ENCODE measurements at regions of chr7 and their contacts with region 1.

Region 1: DNA sequence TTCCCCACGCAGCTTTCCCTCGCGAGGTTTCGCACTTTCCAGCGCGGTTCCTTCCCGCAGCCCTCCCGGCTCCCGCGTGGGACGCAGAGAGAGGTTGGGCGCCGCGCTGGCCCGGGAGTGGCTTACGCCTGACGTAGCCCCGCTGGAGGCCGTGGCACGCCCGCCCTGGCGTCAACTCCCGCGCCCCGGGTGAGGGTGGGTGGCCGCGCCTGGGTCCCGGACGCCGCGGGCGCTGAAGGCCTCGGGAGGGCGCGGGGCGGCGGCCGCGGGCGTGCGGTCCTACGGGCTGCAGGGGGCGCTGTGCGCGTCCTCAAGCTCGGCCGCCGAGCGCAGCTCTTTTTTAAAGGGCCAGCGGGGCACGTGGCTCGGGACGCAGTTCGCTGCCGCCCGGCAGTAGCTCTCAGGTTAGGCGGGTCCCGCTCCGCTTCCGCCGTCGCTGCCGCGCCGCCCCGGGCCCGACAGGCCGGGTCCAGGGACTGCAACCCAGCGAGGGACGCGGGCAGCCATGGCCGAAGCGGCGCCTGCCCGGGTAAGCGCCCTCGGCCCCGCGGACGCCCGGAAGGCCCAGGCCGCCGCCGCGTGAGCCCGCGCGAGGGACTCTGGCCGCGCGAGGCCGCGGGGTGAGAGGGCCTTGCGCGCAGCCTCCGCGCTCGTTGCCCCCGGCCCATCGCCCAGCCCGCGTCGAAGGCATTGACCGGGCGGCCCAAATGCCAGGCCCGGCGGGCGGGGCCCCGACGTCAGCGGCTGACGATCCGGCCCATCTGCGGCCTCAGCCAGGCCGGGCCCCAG is at the start of gene ZNF783:
- DNase-seq: peak; percentile 87 to 91
- H3K4me3 ChIP-seq: peak within 1 kb of the TSS; percentile 65
- H3K4me3 Mint-ChIP-seq: peak within 1 kb of the TSS; percentile 84
- H3K27ac Mint-ChIP-seq: peak within 1 kb of the TSS; percentile 94
- H3K4me1 ChIP-seq: no peaks in the 10 kb centered on the region
- H3K4me1 Mint-ChIP-seq: peaks cover 8% of the 10 kb centered on the region
- H3K27me3 ChIP-seq: no peaks in the 10 kb centered on the region
- H3K27me3 Mint-ChIP-seq: no peaks in the 10 kb centered on the region
- CTCF ChIP-seq: peak; percentile 58 to 90
- total RNA-seq, gene ZNF783: 26.1 and 27.3 TPM in 2 replicates

Region 2: GRCh38 chr7:148867596-148868377 is 394.2 kb before region 1 on chr7:
- CTCF ChIA-PET with region 1: no interaction called
- POLR2A ChIA-PET with region 1: no interaction called
- intact Hi-C with region 1: no loop called
- DNase-seq: no peak
- H3K4me3 ChIP-seq: no peak overlapping the region
- H3K4me3 Mint-ChIP-seq: no peak overlapping the region
- H3K27ac Mint-ChIP-seq: no peak overlapping the region
- H3K4me1 ChIP-seq: peaks cover 17% of the 10 kb centered on the region
- H3K4me1 Mint-ChIP-seq: peaks cover 15% of the 10 kb centered on the region
- H3K27me3 ChIP-seq: no peaks in the 10 kb centered on the region
- H3K27me3 Mint-ChIP-seq: no peaks in the 10 kb centered on the region
- CTCF ChIP-seq: no peak

Region 3: GRCh38 chr7:149195180-149196150 is 66.6 kb before region 1 on chr7 and contains the start of gene ZNF282:
- CTCF ChIA-PET with region 1: interaction called, 8 read pairs
- POLR2A ChIA-PET with region 1: interaction called, 13 read pairs
- intact Hi-C with region 1: no loop called
- DNase-seq: peak; percentile 94 to 96
- H3K4me3 ChIP-seq: peak within 1 kb of the TSS; percentile 94
- H3K4me3 Mint-ChIP-seq: peak within 1 kb of the TSS; percentile 85
- H3K27ac Mint-ChIP-seq: peak within 1 kb of the TSS; percentile 87
- H3K4me1 ChIP-seq: no peaks in the 10 kb centered on the region; the same call in 1 of the 2 replicates
- H3K4me1 Mint-ChIP-seq: no peaks in the 10 kb centered on the region
- H3K27me3 ChIP-seq: no peaks in the 10 kb centered on the region
- H3K27me3 Mint-ChIP-seq: no peaks in the 10 kb centered on the region
- CTCF ChIP-seq: peak; percentile 49 to 82
- total RNA-seq, gene ZNF282: 35.7 and 44.0 TPM in 2 replicates

Region 4: DNA sequence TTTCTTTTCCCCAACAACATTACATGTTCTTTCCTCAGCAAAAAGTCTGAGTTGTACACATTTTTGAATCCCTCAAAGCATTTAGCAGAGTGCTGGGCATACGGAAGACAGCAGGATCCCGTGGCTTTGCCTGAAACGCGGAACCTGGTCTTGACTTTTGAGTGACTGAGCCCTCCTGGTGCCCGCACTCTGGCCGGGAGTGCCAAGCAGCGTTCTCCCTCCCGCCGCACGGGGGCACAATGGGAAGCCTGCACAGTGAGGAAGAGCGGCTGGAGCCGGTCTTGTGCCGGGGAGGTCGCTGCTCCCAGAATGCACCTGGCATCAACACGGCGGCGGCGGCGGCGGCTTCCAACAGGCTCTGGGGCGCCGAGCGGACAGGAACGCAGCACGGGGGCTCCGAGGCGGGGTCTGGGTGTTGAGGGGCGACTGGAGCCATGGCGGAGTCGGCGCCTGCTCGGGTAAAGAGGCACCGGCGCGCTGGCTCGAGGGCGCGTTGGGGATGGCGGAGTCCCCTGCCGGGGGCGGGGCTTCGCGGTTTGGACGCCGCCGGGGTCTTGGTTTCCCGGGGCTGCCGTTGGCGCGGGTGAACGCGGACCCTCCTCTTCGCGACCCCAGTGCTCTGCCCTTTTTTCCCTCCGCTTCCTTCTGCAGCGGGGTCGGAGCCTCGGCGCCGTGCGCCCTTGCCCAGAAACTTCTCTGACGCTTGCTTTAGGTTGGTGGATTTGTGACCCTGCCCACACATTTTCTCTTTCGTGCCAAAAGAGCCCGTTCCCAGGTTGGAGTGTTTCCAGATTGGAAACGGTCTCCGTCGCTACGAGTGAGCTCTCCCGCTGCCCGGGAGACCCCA is 22.5 kb before region 1 on chr7 and contains the start of gene ZNF212:
- CTCF ChIA-PET with region 1: interaction called, 4 read pairs
- POLR2A ChIA-PET with region 1: no interaction called
- intact Hi-C with region 1: loop called (anchors 1 kb)
- DNase-seq: peak; percentile 91 to 95
- H3K4me3 ChIP-seq: peak within 1 kb of the TSS; percentile 99
- H3K4me3 Mint-ChIP-seq: peak within 1 kb of the TSS; percentile 92
- H3K27ac Mint-ChIP-seq: peak within 1 kb of the TSS; percentile 89
- H3K4me1 ChIP-seq: peaks cover 6% of the 10 kb centered on the region
- H3K4me1 Mint-ChIP-seq: peaks cover 7% of the 10 kb centered on the region
- H3K27me3 ChIP-seq: no peaks in the 10 kb centered on the region
- H3K27me3 Mint-ChIP-seq: no peaks in the 10 kb centered on the region
- CTCF ChIP-seq: peak; percentile 72 to 96
- total RNA-seq, gene ZNF212: 15.9 and 18.6 TPM in 2 replicates

Region 5: DNA sequence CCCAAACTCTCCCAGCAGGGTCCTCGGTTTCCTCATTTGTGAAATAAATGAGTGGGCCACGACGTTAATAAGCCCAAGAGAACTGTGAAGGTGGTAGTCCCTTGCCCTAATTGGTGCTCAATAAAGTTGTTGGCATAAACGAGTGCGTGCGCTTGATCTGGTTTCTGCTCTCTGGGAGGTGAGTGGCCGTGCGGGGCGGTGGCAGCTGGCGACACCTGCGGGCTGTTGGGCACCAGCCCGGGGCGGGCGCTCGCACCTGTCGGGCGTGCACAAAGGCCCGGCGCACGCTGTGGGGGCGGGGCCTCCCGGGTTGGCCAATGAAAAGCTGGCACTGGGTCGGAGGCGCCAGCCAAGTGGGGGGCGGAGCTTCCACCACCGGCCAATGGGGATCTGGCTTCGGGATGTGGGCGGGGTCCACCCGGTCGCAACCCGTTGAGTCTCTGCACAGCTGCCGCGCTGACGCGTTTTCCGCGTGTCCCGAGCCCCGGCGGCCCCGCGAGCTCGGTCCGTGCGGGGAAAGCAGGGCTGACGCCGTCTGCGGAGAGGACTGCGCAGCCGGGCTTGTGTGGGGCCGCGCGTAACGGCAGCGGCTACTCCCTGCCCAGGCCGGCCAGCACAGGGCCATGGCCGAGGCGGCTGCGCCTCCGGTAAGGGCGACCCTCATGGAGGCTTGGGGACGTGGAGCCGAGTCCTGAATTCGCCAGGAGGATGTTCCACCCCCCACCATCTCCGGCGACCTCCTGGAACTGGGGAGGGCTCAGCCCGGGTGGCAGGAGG is 23.0 kb after region 1 on chr7:
- CTCF ChIA-PET with region 1: interaction called, 35 read pairs
- POLR2A ChIA-PET with region 1: interaction called, 16 read pairs
- intact Hi-C with region 1: loop called (anchors 2 kb)
- DNase-seq: peak; percentile 98 to 100
- H3K4me3 ChIP-seq: peak overlapping the region; percentile 76
- H3K4me3 Mint-ChIP-seq: peak overlapping the region; percentile 81
- H3K27ac Mint-ChIP-seq: peak overlapping the region; percentile 69
- H3K4me1 ChIP-seq: no peaks in the 10 kb centered on the region
- H3K4me1 Mint-ChIP-seq: peaks cover 8% of the 10 kb centered on the region
- H3K27me3 ChIP-seq: no peaks in the 10 kb centered on the region
- H3K27me3 Mint-ChIP-seq: no peaks in the 10 kb centered on the region
- CTCF ChIP-seq: peak in 1 of 2 experiments; percentile 42

Region 6: GRCh38 chr7:149409895-149410294 is 147.9 kb after region 1 on chr7:
- CTCF ChIA-PET with region 1: interaction called, 6 read pairs
- POLR2A ChIA-PET with region 1: no interaction called
- intact Hi-C with region 1: loop called (anchors 1 kb)
- DNase-seq: no peak
- H3K4me3 ChIP-seq: no peak overlapping the region
- H3K4me3 Mint-ChIP-seq: no peak overlapping the region
- H3K27ac Mint-ChIP-seq: no peak overlapping the region
- H3K4me1 ChIP-seq: no peaks in the 10 kb centered on the region
- H3K4me1 Mint-ChIP-seq: no peaks in the 10 kb centered on the region
- H3K27me3 ChIP-seq: no peaks in the 10 kb centered on the region
- H3K27me3 Mint-ChIP-seq: no peaks in the 10 kb centered on the region
- CTCF ChIP-seq: no peak

Region 7: DNA sequence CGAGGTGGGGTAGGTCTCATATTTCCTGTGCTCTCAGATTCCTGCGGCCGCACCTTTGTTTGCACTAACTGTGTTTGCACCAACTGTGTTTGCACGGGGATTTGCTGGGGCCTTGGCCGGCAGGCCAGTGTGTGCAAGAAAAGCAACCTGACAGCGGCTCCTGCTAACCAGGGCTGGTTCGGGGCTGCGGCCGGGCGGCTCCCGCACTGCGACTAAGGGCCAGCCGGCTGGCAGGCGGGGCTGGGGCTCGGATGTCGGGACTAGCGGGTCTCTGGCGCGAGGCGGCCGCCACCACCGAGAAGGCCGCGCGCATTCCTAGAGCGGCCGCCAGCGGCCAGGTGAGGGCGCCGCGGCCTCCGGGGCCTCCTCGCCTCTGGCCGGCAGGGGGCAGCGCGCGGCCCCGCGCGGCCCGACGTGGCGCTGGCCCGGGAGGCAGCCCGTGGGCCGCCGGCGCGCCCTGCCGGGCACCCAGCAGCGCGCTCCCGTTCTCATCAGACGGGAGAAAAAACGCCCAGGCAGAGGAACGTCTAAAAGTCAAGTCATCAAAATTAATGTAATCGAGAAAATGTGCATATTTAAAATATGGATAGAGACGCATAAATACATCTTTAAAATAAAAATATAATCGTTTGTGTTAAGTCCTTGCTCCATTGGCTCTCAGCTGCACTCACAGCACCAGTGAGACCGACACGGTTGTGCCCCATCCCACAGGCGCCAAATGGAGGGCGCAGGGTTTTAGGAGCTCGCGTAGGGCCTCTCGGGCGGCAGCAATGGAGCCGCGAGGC is 160.3 kb after region 1 on chr7:
- CTCF ChIA-PET with region 1: no interaction called
- POLR2A ChIA-PET with region 1: no interaction called
- intact Hi-C with region 1: loop called (anchors 5 kb)
- DNase-seq: peak; percentile 88 to 91
- H3K4me3 ChIP-seq: peak overlapping the region; percentile 42
- H3K4me3 Mint-ChIP-seq: peak overlapping the region; percentile 78
- H3K27ac Mint-ChIP-seq: peak overlapping the region; percentile 93
- H3K4me1 ChIP-seq: peaks cover 16% of the 10 kb centered on the region; the same call in 1 of the 2 replicates
- H3K4me1 Mint-ChIP-seq: no peaks in the 10 kb centered on the region
- H3K27me3 ChIP-seq: no peaks in the 10 kb centered on the region
- H3K27me3 Mint-ChIP-seq: no peaks in the 10 kb centered on the region
- CTCF ChIP-seq: peak; percentile 41 to 51

Measured in Caco-2 (cell line).